Calu3 (cell line): ENCODE measurements at regions of chr1 and their contacts with region 1.

Region 1: GRCh38 chr1:198088360-198089071 is 68.3 kb upstream of the NEK7 start:
- DNase-seq: peak; percentile 47
- H3K4me3 Mint-ChIP-seq: peak overlapping the region; percentile 63
- H3K27ac Mint-ChIP-seq: peak overlapping the region; percentile 87
- H3K4me1 Mint-ChIP-seq: peaks cover 49% of the 10 kb centered on the region
- H3K27me3 Mint-ChIP-seq: no peaks in the 10 kb centered on the region
- CTCF ChIP-seq: peak; percentile 68

Region 2: GRCh38 chr1:197649188-197649587 is 439.3 kb before region 1 on chr1:
- CTCF ChIA-PET with region 1: no interaction called
- intact Hi-C with region 1: no loop called
- DNase-seq: no peak
- H3K4me3 Mint-ChIP-seq: no peak overlapping the region
- H3K27ac Mint-ChIP-seq: no peak overlapping the region
- H3K4me1 Mint-ChIP-seq: no peaks in the 10 kb centered on the region
- H3K27me3 Mint-ChIP-seq: no peaks in the 10 kb centered on the region
- CTCF ChIP-seq: no peak

Region 3: GRCh38 chr1:197955486-197956394 is 132.8 kb before region 1 on chr1:
- CTCF ChIA-PET with region 1: no interaction called
- intact Hi-C with region 1: loop called (anchors 10 kb)
- DNase-seq: peak; percentile 38
- H3K4me3 Mint-ChIP-seq: peak overlapping the region; percentile 49
- H3K27ac Mint-ChIP-seq: peak overlapping the region; percentile 88
- H3K4me1 Mint-ChIP-seq: peaks cover 87% of the 10 kb centered on the region
- H3K27me3 Mint-ChIP-seq: no peaks in the 10 kb centered on the region
- CTCF ChIP-seq: no peak

Region 4: GRCh38 chr1:198275597-198275996 is 187.1 kb after region 1 on chr1:
- CTCF ChIA-PET with region 1: no interaction called
- intact Hi-C with region 1: loop called (anchors 5 kb)
- DNase-seq: no peak
- H3K4me3 Mint-ChIP-seq: no peak overlapping the region
- H3K27ac Mint-ChIP-seq: no peak overlapping the region
- H3K4me1 Mint-ChIP-seq: peaks cover 27% of the 10 kb centered on the region
- H3K27me3 Mint-ChIP-seq: no peaks in the 10 kb centered on the region
- CTCF ChIP-seq: no peak

Region 5: GRCh38 chr1:198681831-198682759 is 593.6 kb after region 1 on chr1:
- CTCF ChIA-PET with region 1: no interaction called
- intact Hi-C with region 1: loop called (anchors 5 kb)
- DNase-seq: peak; percentile 66
- H3K4me3 Mint-ChIP-seq: peak overlapping the region; percentile 53
- H3K27ac Mint-ChIP-seq: peak overlapping the region; percentile 81
- H3K4me1 Mint-ChIP-seq: peaks cover 20% of the 10 kb centered on the region
- H3K27me3 Mint-ChIP-seq: no peaks in the 10 kb centered on the region
- CTCF ChIP-seq: no peak